Astrocyte of the cerebellum (primary cell): ENCODE measurements at regions of chr17 and their contacts with region 1.

Region 1: GRCh38 chr17:15048381-15048780 is 216.7 kb downstream of the PMP22 start:
- DNase-seq: no peak
- H3K4me3 ChIP-seq: no peak overlapping the region
- CTCF ChIP-seq: no peak

Region 2: DNA sequence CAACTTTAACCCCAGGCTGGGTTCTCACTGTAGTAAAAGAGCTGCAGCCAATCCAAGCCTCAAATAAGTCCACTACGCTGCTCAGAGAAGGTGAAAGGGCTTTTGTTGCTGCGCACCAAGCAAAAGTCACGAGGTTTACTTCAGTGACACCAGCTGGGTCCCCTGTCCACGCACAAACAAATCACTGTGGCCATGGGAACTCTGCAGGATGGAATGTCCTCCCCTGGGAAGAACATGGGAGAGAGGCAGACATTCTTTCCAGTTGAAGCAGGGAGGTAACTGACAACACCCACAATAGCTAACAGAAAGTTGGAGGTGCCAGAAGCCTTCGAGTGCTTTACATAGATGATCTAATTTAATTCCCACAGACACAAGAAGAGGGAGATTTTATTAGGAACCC is 34.8 kb after region 1 on chr17:
- in situ Hi-C with region 1: loop called (anchors 5 kb)
- DNase-seq: no peak
- H3K4me3 ChIP-seq: no peak overlapping the region
- CTCF ChIP-seq: no peak